ENCODE measurements at regions of chr7 and their contacts with region 1.

Region 1: GRCh38 chr7:6577365-6578113 is at the start of gene ZDHHC4:
- DNase-seq: peak; percentile 78 to 91 (median 86)
- ATAC-seq: peak; percentile 95
- H3K4me3 Mint-ChIP-seq: peak within 1 kb of the TSS; percentile 81 to 92 (median 90)
- H3K27ac Mint-ChIP-seq: peak within 1 kb of the TSS; percentile 86 to 97 (median 95)
- H3K4me1 Mint-ChIP-seq: peaks cover 7 to 31% (median 17%) of the 10 kb centered on the region in 4 donors
- H3K27me3 Mint-ChIP-seq: no peaks in the 10 kb centered on the region
- polyA plus RNA-seq, gene ZDHHC4: 77.2 to 81.0 (median 78.9) TPM

Region 2: GRCh38 chr7:6092953-6093354 is 484.6 kb before region 1 on chr7:
- POLR2A ChIA-PET with region 1: no interaction called
- DNase-seq: no peak
- ATAC-seq: no peak
- H3K4me3 Mint-ChIP-seq: no peak overlapping the region
- H3K27ac Mint-ChIP-seq: peak overlapping the region in 1 of 10 donors; percentile 11
- H3K4me1 Mint-ChIP-seq: no peaks in the 10 kb centered on the region
- H3K27me3 Mint-ChIP-seq: peaks cover 4 to 33% (median 20%) of the 10 kb centered on the region in 5 donors

Region 3: GRCh38 chr7:6589829-6590644 is 12.5 kb after region 1 on chr7 and contains the start of gene INTS15:
- POLR2A ChIA-PET with region 1: interaction called, 50 read pairs
- DNase-seq: peak; percentile 67 to 95 (median 88)
- ATAC-seq: peak; percentile 88 to 89
- H3K4me3 Mint-ChIP-seq: peak within 1 kb of the TSS; percentile 82 to 95 (median 94)
- H3K27ac Mint-ChIP-seq: peak within 1 kb of the TSS; percentile 83 to 96 (median 92)
- H3K4me1 Mint-ChIP-seq: peaks cover 5 to 43% (median 20%) of the 10 kb centered on the region in 4 donors
- H3K27me3 Mint-ChIP-seq: no peaks in the 10 kb centered on the region
- polyA plus RNA-seq, gene INTS15: 29.4 to 43.3 (median 30.2) TPM